HCT116 (cell line): ENCODE measurements at regions of chr14 and their contacts with region 1.

Region 1: DNA sequence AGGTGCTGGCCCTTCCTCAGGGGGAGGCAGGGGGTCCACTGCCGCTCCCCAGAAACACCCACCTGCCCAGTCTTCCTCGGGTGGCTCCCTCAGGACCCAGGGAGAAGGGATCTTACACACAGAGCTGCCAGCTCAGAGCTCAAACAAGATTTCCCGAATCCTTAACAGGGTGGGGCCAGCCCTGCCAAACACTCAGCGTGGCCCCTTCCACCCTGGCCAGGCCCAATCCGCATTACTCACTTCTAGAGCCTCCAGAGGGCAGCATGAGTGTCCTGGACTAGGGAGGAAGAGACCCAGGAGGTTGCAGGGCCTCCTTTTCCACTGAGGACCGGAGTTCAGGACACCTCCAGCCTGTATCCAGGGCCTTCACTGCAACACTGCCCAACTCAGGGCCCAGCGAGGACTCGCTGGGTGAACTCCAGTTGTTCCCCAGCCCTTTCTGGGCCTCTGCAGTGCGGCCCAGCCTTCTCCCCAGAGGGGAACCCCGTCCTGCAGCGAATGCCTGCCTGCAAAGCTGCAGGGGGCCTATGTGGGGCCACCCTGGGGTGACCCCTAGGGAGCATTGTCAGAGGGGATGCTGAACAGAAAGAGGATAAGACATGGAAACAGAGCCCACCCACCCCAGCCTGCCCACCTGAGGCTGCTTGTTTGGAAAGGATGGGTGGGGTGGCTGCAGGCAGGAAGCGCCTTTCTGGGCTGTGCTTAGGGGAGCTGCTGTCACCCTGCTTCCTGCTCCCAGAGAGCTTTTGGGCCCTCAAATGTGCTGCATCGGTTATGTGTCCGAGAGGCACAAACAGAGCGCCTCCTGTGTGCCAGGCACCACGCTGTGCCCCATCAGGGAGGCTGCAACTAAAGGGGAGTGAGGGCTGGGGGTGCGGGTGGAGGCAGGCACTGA is 43.8 kb downstream of the CCNK start:
- DNase-seq: no peak
- ATAC-seq: peak; percentile 69
- H3K4me3 ChIP-seq: no peak overlapping the region
- H3K27ac ChIP-seq: no peak overlapping the region
- H3K4me1 ChIP-seq: peaks cover 0 to 6% of the 10 kb centered on the region in 2 experiments; a peak in 2 of 4 replicates
- H3K27me3 ChIP-seq: no peaks in the 10 kb centered on the region
- CTCF ChIP-seq: peak; percentile 12 to 30 (median 14); a peak in 2 of 6 replicates
- POLR2A ChIP-seq: no peak
- RAD21 ChIP-seq: peak; percentile 56

Region 2: DNA sequence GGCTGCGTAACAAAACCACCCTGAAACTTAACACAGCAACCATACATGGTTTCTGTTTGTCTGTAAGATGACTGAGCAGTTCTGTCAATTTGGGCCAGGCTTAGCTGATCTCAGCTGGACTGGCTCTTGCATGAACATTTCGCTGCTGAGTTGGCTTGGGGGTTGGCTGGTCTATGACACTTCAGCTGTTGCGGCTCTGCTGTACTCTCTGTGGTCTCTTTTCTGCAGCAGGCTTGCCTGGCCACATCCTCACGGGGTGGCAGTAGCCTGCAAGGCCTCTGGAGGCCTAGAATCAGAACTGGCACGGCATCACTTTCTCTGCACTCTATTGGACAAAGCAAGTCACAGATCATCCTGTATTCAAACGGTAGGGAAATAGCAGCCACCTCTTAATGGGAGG is 469.2 kb before region 1 on chr14:
- CTCF ChIA-PET with region 1: no interaction called
- POLR2A ChIA-PET with region 1: no interaction called
- RAD21 ChIA-PET with region 1: no interaction called
- intact Hi-C with region 1: no loop called
- DNase-seq: no peak
- ATAC-seq: no peak
- H3K4me3 ChIP-seq: no peak overlapping the region
- H3K27ac ChIP-seq: no peak overlapping the region
- H3K4me1 ChIP-seq: no peaks in the 10 kb centered on the region
- H3K27me3 ChIP-seq: no peaks in the 10 kb centered on the region
- CTCF ChIP-seq: no peak
- POLR2A ChIP-seq: no peak
- RAD21 ChIP-seq: no peak

Region 3: DNA sequence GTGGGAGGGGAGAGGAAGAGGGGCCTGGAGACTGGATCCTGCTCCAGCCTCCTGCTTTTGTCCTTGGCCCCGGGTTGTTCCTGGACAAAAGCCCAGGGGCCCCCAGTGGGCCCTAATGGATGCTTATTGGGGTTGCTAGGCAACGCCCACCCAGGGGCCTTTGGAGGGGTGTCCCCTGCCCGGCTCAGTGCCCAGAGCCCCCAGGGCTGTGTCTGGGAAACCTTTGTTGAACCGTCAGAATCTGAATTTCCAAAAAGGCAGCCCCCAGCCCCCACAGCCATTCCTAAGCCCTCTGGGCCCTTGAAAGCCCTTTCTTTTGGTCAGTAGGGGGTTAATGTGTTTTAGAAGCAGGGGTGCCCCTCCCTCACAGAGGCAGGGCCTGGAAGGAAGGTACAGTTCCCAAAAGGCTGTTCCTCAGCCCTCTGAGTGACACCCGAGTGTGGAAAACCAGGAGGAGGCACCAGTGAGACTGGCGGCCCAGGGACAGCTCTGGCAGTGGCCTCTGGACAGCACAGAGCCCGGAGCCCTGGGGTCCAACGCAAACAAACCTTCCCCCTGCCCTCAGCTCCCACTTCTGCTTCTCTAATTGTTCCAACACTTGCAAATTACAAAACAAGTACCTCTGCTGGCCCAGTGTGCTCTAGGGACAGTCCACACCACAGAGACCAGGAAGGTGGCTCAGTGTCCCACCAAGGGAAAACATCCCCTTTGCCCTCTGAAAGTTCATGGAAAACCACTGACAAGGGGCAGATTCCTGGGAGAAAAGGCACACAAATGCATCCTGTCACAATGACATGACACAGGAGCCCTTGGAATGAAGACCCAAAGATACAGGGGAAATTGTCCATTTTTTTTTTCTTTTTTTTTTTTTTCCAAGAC is 139.2 kb after region 1 on chr14:
- CTCF ChIA-PET with region 1: no interaction called
- POLR2A ChIA-PET with region 1: no interaction called
- RAD21 ChIA-PET with region 1: no interaction called
- intact Hi-C with region 1: no loop called
- DNase-seq: no peak
- ATAC-seq: peak; percentile 52; the same call in 1 of the 2 replicates
- H3K4me3 ChIP-seq: no peak overlapping the region
- H3K27ac ChIP-seq: no peak overlapping the region
- H3K4me1 ChIP-seq: peaks cover 4 to 8% of the 10 kb centered on the region in 2 experiments; a peak in 3 of 4 replicates
- H3K27me3 ChIP-seq: no peaks in the 10 kb centered on the region
- CTCF ChIP-seq: 0 out of 6 replicates have a peak, but pooled peaks of 1 of the 3 experiments have one; percentile 6
- POLR2A ChIP-seq: no peak
- RAD21 ChIP-seq: no peak

Region 4: GRCh38 chr14:99946652-99947489 is 421.8 kb after region 1 on chr14:
- CTCF ChIA-PET with region 1: no interaction called
- POLR2A ChIA-PET with region 1: no interaction called
- RAD21 ChIA-PET with region 1: no interaction called
- intact Hi-C with region 1: loop called (anchors 10 kb)
- DNase-seq: no peak
- ATAC-seq: peak; percentile 85
- H3K4me3 ChIP-seq: no peak overlapping the region
- H3K27ac ChIP-seq: no peak overlapping the region
- H3K4me1 ChIP-seq: peaks cover 4 to 13% of the 10 kb centered on the region in 2 experiments
- H3K27me3 ChIP-seq: no peaks in the 10 kb centered on the region
- CTCF ChIP-seq: peak; percentile 48 to 97 (median 97); a peak in 5 of 6 replicates
- POLR2A ChIP-seq: no peak
- RAD21 ChIP-seq: peak; percentile 43